Panc1 (cell line): ENCODE measurements at regions of chr7 and their contacts with region 1.

Region 1: DNA sequence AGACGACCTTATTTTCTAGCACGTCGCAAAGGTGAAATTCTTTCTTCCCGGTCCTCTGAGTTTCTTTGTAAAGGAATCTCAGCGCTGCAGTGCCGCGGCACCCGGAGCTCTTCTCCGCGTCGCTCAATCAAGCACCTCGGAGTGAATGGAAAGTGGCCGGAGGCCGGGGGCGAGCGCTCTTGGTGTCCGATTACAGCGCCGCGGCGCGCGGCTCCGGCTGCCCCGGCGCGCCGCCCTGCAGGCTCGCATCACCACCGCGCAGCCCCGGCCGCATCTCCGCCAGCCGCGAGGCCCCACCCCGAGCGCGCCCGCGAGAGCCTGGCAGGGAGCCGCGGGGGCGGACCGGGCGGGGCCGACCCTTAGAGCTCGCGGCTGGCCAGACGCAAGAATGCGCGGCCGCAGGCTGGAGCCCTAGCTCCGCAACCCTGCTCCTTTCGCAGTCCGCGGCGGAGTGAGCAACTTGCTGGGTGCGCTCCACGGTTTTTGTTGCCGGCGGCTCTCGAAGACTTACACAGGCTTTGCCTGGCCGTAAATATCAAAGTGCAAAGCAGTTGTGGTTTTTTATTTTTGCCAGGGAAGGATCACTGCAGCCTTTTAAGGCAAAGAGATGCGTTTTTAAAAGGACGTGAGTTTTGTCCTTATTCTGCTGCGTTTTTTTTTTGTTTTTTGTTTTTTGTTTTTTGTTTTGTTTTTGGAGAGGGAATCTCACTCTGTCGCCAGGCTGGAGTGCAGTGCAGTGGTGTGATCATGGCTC is at the start of gene SEMA3C:
- DNase-seq: peak; percentile 90
- ATAC-seq: peak; percentile 87
- H3K4me3 ChIP-seq: peak within 1 kb of the TSS; percentile 95 to 99
- H3K27ac ChIP-seq: peak within 1 kb of the TSS; percentile 100
- H3K4me1 ChIP-seq: peaks cover 59% of the 10 kb centered on the region
- H3K27me3 ChIP-seq: no peaks in the 10 kb centered on the region
- CTCF ChIP-seq: peak; percentile 22; the same call in 1 of the 2 replicates
- total RNA-seq, gene SEMA3C: 232 TPM

Region 2: DNA sequence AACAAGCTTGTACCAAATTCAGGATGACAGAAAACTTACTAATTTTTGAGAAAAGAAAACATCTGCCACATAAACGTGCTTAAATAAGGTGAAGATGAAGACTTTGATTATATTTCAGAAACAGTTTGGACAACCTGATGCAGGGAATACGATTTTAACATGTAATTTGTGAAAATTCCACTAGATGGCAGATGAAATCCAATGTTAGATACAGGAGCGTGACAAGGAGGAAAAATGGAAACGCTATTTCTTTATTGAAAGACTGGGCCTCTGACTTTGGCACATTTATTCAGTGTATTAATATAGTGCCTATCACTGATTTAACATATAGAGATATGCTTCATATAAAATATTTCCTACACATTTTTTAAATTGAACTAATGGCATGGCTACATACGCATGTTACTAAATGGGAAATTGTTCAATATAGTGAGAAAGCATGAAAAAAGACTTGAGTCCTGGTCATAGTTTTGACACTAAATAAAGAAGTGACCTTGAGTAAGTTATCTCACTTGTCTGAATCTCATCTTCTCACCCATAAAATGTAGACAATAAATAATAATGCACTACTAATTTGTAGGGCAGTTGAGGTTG is 219.9 kb before region 1 on chr7:
- CTCF ChIA-PET with region 1: no interaction called
- POLR2A ChIA-PET with region 1: no interaction called
- in situ Hi-C with region 1: no loop called
- intact Hi-C with region 1: loop called (anchors 2 kb)
- DNase-seq: peak; percentile 78
- ATAC-seq: peak; percentile 91
- H3K4me3 ChIP-seq: no peak overlapping the region
- H3K27ac ChIP-seq: peak overlapping the region; percentile 87
- H3K4me1 ChIP-seq: peaks cover 21% of the 10 kb centered on the region
- H3K27me3 ChIP-seq: no peaks in the 10 kb centered on the region
- CTCF ChIP-seq: peak; percentile 56; the same call in 1 of the 2 replicates

Region 3: GRCh38 chr7:80974396-80975334 is 55.6 kb after region 1 on chr7:
- CTCF ChIA-PET with region 1: no interaction called
- POLR2A ChIA-PET with region 1: no interaction called
- in situ Hi-C with region 1: no loop called
- intact Hi-C with region 1: no loop called
- DNase-seq: no peak
- ATAC-seq: no peak
- H3K4me3 ChIP-seq: no peak overlapping the region
- H3K27ac ChIP-seq: peak overlapping the region; percentile 48; the same call in 1 of the 2 replicates
- H3K4me1 ChIP-seq: no peaks in the 10 kb centered on the region
- H3K27me3 ChIP-seq: no peaks in the 10 kb centered on the region
- CTCF ChIP-seq: no peak

Region 4: DNA sequence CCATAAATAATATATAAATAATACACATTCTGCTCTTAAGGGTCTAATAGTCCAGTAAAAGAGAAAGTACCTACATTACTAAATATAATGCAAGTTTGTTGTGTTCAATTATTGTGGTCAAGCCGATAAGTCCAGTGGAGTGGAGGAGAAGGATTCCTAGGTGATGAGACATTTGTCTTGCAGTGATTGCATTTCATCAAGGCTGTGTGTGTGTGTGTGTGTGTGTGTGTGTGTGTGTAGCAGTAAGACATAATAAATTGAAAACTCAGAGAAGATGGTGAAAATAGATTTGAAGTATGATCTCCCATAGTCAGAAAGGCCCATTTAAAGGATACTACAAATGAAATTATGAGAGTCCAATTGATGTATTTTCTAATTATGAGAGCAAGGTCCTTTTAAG is 192.3 kb after region 1 on chr7:
- CTCF ChIA-PET with region 1: no interaction called
- POLR2A ChIA-PET with region 1: no interaction called
- in situ Hi-C with region 1: no loop called
- intact Hi-C with region 1: loop called (anchors 10 kb)
- DNase-seq: peak; percentile 84
- ATAC-seq: peak; percentile 85
- H3K4me3 ChIP-seq: no peak overlapping the region
- H3K27ac ChIP-seq: peak overlapping the region; percentile 98
- H3K4me1 ChIP-seq: peaks cover 25% of the 10 kb centered on the region
- H3K27me3 ChIP-seq: no peaks in the 10 kb centered on the region
- CTCF ChIP-seq: no peak

Region 5: GRCh38 chr7:81195033-81195432 is 275.9 kb after region 1 on chr7:
- CTCF ChIA-PET with region 1: interaction called, 13 read pairs
- POLR2A ChIA-PET with region 1: no interaction called
- in situ Hi-C with region 1: no loop called
- intact Hi-C with region 1: no loop called
- DNase-seq: no peak
- ATAC-seq: no peak
- H3K4me3 ChIP-seq: no peak overlapping the region
- H3K27ac ChIP-seq: no peak overlapping the region
- H3K4me1 ChIP-seq: no peaks in the 10 kb centered on the region
- H3K27me3 ChIP-seq: no peaks in the 10 kb centered on the region
- CTCF ChIP-seq: no peak

Region 6: DNA sequence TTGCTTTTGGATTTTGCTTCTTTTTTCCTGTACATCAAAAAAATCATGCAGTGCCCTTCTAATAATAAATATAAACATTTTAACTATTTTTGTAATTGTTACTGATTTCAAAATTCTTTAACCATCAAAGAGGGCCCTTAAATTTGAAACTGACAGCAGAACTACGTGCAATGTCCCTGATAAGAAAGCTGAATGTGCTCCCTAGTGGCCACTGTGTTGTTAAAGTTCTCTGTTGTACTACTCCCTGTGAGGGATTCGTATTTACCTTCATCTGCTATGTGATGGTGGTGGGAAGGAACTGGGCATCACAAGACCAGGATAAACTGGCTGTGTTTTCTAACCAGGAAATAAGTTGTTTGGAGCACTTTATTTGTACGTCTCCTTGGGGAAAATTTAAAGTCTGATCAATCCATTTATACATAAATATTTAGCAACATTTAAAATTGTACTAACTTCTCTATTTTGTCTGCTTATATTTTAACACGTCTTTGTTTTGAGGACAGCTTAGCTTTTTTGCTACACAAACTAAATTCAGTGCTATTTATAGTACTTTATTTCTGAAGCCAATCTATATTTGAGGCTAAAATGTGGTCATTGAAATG is 528.4 kb after region 1 on chr7:
- CTCF ChIA-PET with region 1: no interaction called
- POLR2A ChIA-PET with region 1: no interaction called
- in situ Hi-C with region 1: no loop called
- intact Hi-C with region 1: loop called (anchors 5 kb)
- DNase-seq: peak; percentile 75
- ATAC-seq: peak; percentile 100
- H3K4me3 ChIP-seq: no peak overlapping the region
- H3K27ac ChIP-seq: peak overlapping the region; percentile 61; the same call in 1 of the 2 replicates
- H3K4me1 ChIP-seq: peaks cover 13% of the 10 kb centered on the region
- H3K27me3 ChIP-seq: no peaks in the 10 kb centered on the region
- CTCF ChIP-seq: peak; percentile 72

Region 7: DNA sequence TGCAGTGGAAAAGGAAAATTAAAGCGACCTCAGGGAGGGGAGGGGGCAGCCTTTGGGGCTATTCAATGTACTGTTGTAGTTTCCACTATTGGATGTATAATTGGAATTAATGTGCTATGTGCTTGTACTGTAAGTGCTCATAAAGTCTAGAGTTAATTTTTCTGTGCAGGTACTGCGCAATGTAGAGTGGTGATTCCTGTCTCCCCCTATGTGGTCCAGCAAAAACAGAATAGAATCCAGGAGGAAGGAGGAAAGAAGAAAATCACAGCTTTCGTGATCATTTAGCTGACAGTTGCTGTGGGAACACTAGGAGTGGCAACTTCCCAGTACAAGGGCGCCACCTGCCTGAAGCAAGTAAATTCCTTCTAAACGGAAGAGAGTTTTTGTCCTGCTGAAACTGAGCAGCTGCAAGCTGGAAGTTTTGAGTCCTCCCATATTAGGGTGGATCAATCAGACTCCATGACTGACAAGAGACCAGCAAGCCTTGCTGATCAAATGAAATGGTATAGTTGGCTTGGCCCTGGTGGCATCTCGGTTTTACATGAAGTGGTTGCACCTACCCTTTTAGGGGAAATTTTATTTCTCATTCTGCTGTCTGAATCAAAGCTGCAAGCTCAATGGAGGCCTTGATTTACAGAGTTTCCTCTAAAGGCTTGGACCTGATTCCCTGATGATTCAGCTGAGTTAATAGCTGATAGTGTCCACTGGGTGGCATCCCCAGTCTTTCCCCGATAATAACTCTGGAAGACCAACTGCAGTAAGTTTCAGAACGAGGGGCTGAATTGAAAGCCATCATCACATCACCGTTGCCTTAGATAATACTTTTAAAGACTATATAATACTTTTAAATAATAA is 551.0 kb after region 1 on chr7:
- CTCF ChIA-PET with region 1: interaction called, 15 read pairs
- POLR2A ChIA-PET with region 1: interaction called, 6 read pairs
- in situ Hi-C with region 1: no loop called
- intact Hi-C with region 1: loop called (anchors 5 kb)
- DNase-seq: no peak
- ATAC-seq: peak; percentile 95
- H3K4me3 ChIP-seq: no peak overlapping the region
- H3K27ac ChIP-seq: peak overlapping the region; percentile 89
- H3K4me1 ChIP-seq: peaks cover 27% of the 10 kb centered on the region
- H3K27me3 ChIP-seq: no peaks in the 10 kb centered on the region
- CTCF ChIP-seq: peak; percentile 85